ENCODE measurements at regions of chr18 and their contacts with region 1.

Region 1: GRCh38 chr18:55337908-55338521 is 250.0 kb downstream of the TCF4 start:
- DNase-seq: peak; percentile 69
- H3K4me3 ChIP-seq: peak overlapping the region in 1 of 4 donors; percentile 3
- H3K27ac ChIP-seq: peak overlapping the region; percentile 71 to 75 (median 72)
- H3K4me1 ChIP-seq: peaks cover 0 to 30% (median 15%) of the 10 kb centered on the region in 4 donors
- H3K27me3 ChIP-seq: no peaks in the 10 kb centered on the region
- CTCF ChIP-seq: no peak
- EP300 ChIP-seq: no peak
- POLR2A ChIP-seq: no peak

Region 2: GRCh38 chr18:55781481-55781957 is 443.5 kb after region 1 on chr18:
- intact Hi-C with region 1: loop called (anchors 5 kb)
- DNase-seq: no peak
- H3K4me3 ChIP-seq: no peak overlapping the region
- H3K27ac ChIP-seq: no peak overlapping the region
- H3K4me1 ChIP-seq: peaks cover 0 to 10% (median 0%) of the 10 kb centered on the region in 4 donors
- H3K27me3 ChIP-seq: no peaks in the 10 kb centered on the region
- CTCF ChIP-seq: peak in 3 of 4 experiments; percentile 28 to 57 (median 39)
- EP300 ChIP-seq: no peak
- POLR2A ChIP-seq: no peak